ENCODE measurements at regions of chr6 and their contacts with region 1.

Region 1: DNA sequence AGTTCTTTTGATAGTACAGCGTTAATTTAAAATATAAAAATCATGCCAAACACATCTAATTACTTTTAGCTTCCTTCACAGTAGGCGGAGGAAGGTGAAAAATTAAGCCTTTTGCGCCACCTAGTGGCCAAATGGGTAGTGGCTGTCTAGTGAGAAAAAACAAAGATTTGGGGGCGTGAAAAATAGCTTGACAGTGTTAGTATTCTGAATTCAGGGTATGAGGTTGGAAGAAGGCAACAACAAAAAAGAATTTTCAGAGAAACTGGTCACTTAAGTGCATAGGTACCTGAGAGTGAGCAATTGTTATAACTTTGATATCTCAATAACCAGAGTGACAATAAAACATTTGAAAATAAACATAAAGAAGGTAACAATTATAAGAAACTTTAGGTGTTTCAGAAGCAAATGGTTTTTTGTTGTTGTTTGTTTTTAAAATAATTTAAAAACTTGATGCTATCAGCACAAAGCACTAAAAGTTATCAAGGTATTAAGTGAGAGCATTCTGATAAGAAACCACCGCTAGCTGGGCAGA is 14.3 kb downstream of the PSMB9 start:
- DNase-seq: peak; percentile 91
- ATAC-seq: peak; percentile 64
- H3K4me3 ChIP-seq: no peak overlapping the region
- H3K4me3 Mint-ChIP-seq: no peak overlapping the region
- H3K27ac ChIP-seq: no peak overlapping the region
- H3K27ac Mint-ChIP-seq: no peak overlapping the region
- H3K4me1 ChIP-seq: peaks cover 27 to 28% of the 10 kb centered on the region in 2 donors
- H3K4me1 Mint-ChIP-seq: peaks cover 30% of the 10 kb centered on the region
- H3K27me3 ChIP-seq: no peaks in the 10 kb centered on the region
- H3K27me3 Mint-ChIP-seq: no peaks in the 10 kb centered on the region
- CTCF ChIP-seq: peak; percentile 94

Region 2: GRCh38 chr6:32432050-32432450 is 436.3 kb before region 1 on chr6:
- CTCF ChIA-PET with region 1: interaction called, 21 read pairs
- POLR2A ChIA-PET with region 1: no interaction called
- intact Hi-C with region 1: loop called (anchors 1 kb)
- DNase-seq: peak; percentile 78
- ATAC-seq: peak; percentile 38
- H3K4me3 ChIP-seq: no peak overlapping the region
- H3K4me3 Mint-ChIP-seq: no peak overlapping the region
- H3K27ac ChIP-seq: no peak overlapping the region
- H3K27ac Mint-ChIP-seq: peak overlapping the region; percentile 63
- H3K4me1 ChIP-seq: peaks cover 21 to 27% of the 10 kb centered on the region in 2 donors
- H3K4me1 Mint-ChIP-seq: peaks cover 32% of the 10 kb centered on the region
- H3K27me3 ChIP-seq: no peaks in the 10 kb centered on the region
- H3K27me3 Mint-ChIP-seq: no peaks in the 10 kb centered on the region
- CTCF ChIP-seq: peak; percentile 83

Region 3: GRCh38 chr6:32796848-32797776 is 71.2 kb before region 1 on chr6:
- CTCF ChIA-PET with region 1: interaction called, 20 read pairs
- POLR2A ChIA-PET with region 1: no interaction called
- intact Hi-C with region 1: loop called (anchors 1 kb)
- DNase-seq: peak; percentile 92
- ATAC-seq: peak; percentile 83
- H3K4me3 ChIP-seq: peak overlapping the region in 4 of 5 experiments; percentile 26 to 53 (median 42)
- H3K4me3 Mint-ChIP-seq: peak overlapping the region; percentile 90
- H3K27ac ChIP-seq: peak overlapping the region; percentile 60 to 64
- H3K27ac Mint-ChIP-seq: peak overlapping the region; percentile 93
- H3K4me1 ChIP-seq: peaks cover 26 to 32% of the 10 kb centered on the region in 2 donors
- H3K4me1 Mint-ChIP-seq: peaks cover 40% of the 10 kb centered on the region
- H3K27me3 ChIP-seq: no peaks in the 10 kb centered on the region
- H3K27me3 Mint-ChIP-seq: no peaks in the 10 kb centered on the region
- CTCF ChIP-seq: peak; percentile 91

Region 4: DNA sequence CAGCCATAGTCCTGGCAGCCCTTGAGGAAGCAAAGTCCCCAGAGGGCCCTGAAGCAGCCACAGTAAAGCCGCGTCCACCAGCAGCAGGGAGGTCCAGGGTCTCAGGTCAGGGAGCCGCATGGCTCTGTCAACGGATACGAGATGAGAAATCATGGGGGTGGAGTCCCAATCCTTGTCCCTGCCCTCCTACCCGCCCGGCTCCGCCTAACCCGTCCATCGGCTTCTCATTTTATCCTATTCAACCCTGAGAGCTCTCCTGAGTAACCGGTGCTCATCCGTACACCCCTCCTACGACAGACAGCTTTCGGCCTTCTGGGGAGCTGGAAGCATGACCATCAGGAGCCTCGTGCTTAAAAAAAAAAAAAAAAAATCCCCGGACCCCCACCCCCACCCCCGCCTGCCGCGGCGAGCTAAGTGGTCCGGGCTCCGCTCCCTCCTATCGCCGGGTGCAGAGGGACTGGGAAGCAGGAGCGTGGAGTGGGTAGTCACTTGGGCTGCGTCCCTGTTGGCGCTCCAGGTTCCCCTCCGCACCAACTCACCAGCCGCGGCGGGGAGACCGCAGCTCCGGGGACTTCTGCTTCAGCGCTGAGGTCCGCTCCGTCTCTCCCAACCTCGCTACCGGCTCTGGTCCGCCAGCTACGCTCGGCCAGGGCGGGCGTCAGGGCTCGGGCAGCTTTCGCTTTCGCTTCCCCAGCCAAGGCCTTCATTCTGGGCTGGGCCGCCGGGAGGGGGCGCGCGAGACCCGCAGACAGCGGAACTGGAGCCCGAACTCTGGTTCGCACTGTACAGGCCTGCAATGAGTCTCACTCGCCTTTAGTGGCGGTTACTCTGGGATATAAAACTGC is 30.0 kb before region 1 on chr6 and contains the start of gene TAP2:
- CTCF ChIA-PET with region 1: interaction called, 249 read pairs
- POLR2A ChIA-PET with region 1: interaction called, 37 read pairs
- intact Hi-C with region 1: loop called (anchors 1 kb)
- DNase-seq: peak; percentile 97
- ATAC-seq: peak; percentile 84
- H3K4me3 ChIP-seq: peak within 1 kb of the TSS; percentile 71 to 80 (median 76)
- H3K4me3 Mint-ChIP-seq: peak within 1 kb of the TSS; percentile 97
- H3K27ac ChIP-seq: peak within 1 kb of the TSS; percentile 83 to 97
- H3K27ac Mint-ChIP-seq: peak within 1 kb of the TSS; percentile 99
- H3K4me1 ChIP-seq: peaks cover 59 to 73% of the 10 kb centered on the region in 2 donors
- H3K4me1 Mint-ChIP-seq: peaks cover 92% of the 10 kb centered on the region
- H3K27me3 ChIP-seq: no peaks in the 10 kb centered on the region
- H3K27me3 Mint-ChIP-seq: no peaks in the 10 kb centered on the region
- CTCF ChIP-seq: peak; percentile 90
- total RNA-seq, gene TAP2: 126 and 135 TPM in 2 replicates

Region 5: GRCh38 chr6:32879691-32880090 is 11.4 kb after region 1 on chr6:
- CTCF ChIA-PET with region 1: interaction called, 12 read pairs
- POLR2A ChIA-PET with region 1: interaction called, 4 read pairs
- intact Hi-C with region 1: no loop called
- DNase-seq: no peak
- ATAC-seq: no peak
- H3K4me3 ChIP-seq: peak overlapping the region in 3 of 5 experiments; percentile 13 to 41 (median 25)
- H3K4me3 Mint-ChIP-seq: peak overlapping the region; percentile 79
- H3K27ac ChIP-seq: no peak overlapping the region
- H3K27ac Mint-ChIP-seq: no peak overlapping the region
- H3K4me1 ChIP-seq: peaks cover 10 to 12% of the 10 kb centered on the region in 2 donors
- H3K4me1 Mint-ChIP-seq: peaks cover 19% of the 10 kb centered on the region
- H3K27me3 ChIP-seq: peaks cover 0 to 6% (median 0%) of the 10 kb centered on the region in 4 experiments
- H3K27me3 Mint-ChIP-seq: peaks cover 3% of the 10 kb centered on the region
- CTCF ChIP-seq: no peak

Region 6: GRCh38 chr6:32952817-32953739 is 84.8 kb after region 1 on chr6 and contains the start of gene HLA-DMA:
- CTCF ChIA-PET with region 1: interaction called, 71 read pairs
- POLR2A ChIA-PET with region 1: interaction called, 11 read pairs
- intact Hi-C with region 1: no loop called
- DNase-seq: peak; percentile 97
- ATAC-seq: peak; percentile 91
- H3K4me3 ChIP-seq: peak within 1 kb of the TSS; percentile 72 to 98 (median 93)
- H3K4me3 Mint-ChIP-seq: peak within 1 kb of the TSS; percentile 96
- H3K27ac ChIP-seq: peak within 1 kb of the TSS; percentile 91 to 92
- H3K27ac Mint-ChIP-seq: peak within 1 kb of the TSS; percentile 98
- H3K4me1 ChIP-seq: peaks cover 70 to 84% of the 10 kb centered on the region in 2 donors
- H3K4me1 Mint-ChIP-seq: peaks cover 85% of the 10 kb centered on the region
- H3K27me3 ChIP-seq: no peaks in the 10 kb centered on the region
- H3K27me3 Mint-ChIP-seq: no peaks in the 10 kb centered on the region
- CTCF ChIP-seq: peak; percentile 88
- total RNA-seq, gene HLA-DMA: 554 and 558 TPM in 2 replicates

Measured in B cell (primary cell).